ENCODE measurements at regions of chr19 and their contacts with region 1.

Region 1: DNA sequence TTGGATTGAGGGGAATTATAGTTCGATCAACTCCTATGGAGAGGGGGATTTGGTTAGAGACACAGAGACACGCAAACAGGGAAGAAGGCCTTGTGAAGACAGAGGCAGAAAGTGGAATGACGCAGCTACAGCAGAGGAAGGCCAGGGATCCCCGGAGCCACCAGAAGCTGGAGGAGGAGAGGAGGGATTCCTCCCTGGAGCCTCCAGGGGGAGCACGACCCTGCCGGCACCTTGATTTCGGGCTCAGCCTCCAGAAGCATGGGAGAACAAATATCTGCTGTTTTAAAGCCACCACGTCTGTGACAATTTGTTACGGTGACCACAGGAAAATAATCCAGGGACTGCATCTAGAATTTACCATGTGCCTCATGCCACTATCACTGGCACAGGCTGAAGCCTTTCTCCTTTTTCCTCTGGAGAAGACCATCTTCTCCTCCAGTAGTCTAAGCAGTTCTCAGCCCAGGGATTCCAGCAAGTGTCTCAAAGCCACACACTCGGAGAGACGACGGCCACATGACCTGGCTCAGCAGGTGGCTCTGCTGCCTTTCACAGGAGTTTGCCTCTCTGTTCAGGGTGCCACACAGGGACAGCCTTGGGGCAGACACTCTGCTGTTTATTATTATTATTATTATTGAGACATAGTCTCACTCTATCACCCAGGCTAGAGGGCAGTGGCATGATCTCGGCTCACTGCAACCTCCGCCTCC is 39.9 kb upstream of the CCNE1 start:
- DNase-seq: no peak
- H3K4me3 ChIP-seq: no peak overlapping the region
- H3K27ac ChIP-seq: no peak overlapping the region
- H3K4me1 ChIP-seq: peaks cover 0 to 5% (median 4%) of the 10 kb centered on the region in 4 donors
- H3K27me3 ChIP-seq: no peaks in the 10 kb centered on the region
- CTCF ChIP-seq: peak; percentile 67 to 84 (median 69)
- EP300 ChIP-seq: no peak
- POLR2A ChIP-seq: no peak

Region 2: DNA sequence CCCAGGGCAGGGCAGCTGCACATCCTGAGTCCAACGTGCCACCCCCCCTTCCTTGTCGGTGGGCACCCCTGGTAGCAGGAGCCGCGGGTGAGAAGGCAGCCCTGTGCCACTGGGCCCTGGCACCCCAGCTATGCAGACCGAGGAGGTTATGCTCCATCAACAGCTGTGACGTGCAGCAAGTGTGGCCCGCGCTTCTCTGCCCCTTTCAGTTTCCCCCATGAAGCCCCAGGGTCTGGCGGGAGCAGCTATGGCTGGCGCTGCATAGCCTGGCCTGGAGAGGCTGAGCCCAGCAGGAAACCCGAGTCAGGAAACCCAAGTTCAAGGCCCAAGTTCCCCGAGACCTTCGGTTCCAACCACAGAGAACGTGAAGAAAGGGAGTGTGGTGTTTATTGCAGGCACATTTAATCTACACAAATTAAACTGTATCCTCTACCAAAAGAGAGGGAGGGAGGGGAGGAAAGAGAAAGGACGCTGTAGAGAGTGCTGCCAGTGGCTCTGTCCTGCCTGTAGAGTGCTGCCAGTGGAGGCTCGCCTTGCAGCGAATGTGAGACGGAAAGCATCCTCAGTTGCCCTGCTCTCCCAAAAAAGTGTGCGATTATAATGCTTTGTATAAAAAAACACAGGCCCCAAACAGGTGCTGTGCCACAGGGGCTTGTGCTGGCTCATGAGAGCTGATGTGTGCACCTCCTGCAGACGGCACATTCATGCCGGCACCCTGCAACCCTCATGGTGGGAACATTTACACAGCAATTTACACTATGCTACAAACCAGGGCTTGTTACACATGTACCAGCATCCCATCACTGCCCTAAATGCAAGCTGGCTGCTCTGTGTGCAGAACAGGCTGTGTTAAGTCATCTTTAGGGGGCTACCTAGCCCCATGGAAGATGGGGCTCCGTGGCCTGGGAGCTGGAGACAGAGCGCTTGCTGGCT is 149.5 kb before region 1 on chr19:
- intact Hi-C with region 1: no loop called
- DNase-seq: no peak
- H3K4me3 ChIP-seq: no peak overlapping the region
- H3K27ac ChIP-seq: no peak overlapping the region
- H3K4me1 ChIP-seq: no peaks in the 10 kb centered on the region
- H3K27me3 ChIP-seq: peaks cover 0 to 28% (median 0%) of the 10 kb centered on the region in 4 donors
- CTCF ChIP-seq: no peak
- EP300 ChIP-seq: no peak
- POLR2A ChIP-seq: no peak

Region 3: GRCh38 chr19:29715701-29716581 is 55.9 kb before region 1 on chr19:
- intact Hi-C with region 1: no loop called
- DNase-seq: no peak
- H3K4me3 ChIP-seq: peak overlapping the region; percentile 68 to 100 (median 98)
- H3K27ac ChIP-seq: peak overlapping the region; percentile 91 to 97 (median 94)
- H3K4me1 ChIP-seq: peaks cover 17 to 53% (median 42%) of the 10 kb centered on the region in 4 donors
- H3K27me3 ChIP-seq: no peaks in the 10 kb centered on the region
- CTCF ChIP-seq: no peak
- EP300 ChIP-seq: no peak
- POLR2A ChIP-seq: no peak

Region 4: DNA sequence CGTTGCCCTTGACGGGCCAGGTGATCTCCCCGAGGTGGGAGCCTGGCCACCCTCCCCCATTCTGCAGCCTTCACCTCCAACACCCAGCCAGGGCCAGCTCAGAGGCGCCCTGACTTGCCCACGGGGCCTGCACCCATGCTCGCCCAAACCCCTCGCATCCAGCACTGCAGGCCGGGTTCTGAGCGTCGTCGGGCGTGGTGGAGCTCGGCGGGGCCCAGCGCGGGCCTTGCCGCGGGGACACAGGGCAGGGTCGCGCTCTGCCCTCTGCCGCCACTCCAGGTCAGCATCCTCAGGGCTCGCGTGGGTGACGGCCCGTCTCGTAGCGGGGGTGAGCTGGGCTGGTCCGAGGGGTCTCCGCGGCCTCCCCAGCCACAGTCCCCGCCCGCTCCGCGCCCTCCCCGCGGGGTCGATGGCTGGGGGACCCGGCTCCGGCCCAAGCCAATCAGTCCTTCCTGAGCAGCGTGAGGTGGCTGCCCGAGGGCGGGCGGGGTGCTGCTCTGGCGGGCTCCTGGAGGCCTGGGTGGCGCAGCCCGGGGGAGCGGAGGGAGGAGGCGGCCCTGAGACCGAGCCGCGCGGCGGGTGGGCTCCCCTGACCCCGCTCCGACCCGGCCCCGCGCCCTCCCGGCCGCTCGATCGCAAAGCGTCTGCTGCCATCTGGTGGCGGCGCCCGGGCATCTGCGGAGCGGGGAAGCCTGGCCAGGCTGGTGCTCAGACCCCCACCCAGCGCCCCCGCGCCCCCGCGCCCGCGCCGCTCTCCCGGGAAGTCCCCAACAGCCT is 101.4 kb after region 1 on chr19:
- intact Hi-C with region 1: loop called (anchors 5 kb)
- DNase-seq: no peak
- H3K4me3 ChIP-seq: peak overlapping the region; percentile 52 to 63 (median 54)
- H3K27ac ChIP-seq: no peak overlapping the region
- H3K4me1 ChIP-seq: peaks cover 18 to 42% (median 36%) of the 10 kb centered on the region in 4 donors
- H3K27me3 ChIP-seq: peaks cover 0 to 41% (median 12%) of the 10 kb centered on the region in 4 donors
- CTCF ChIP-seq: peak; percentile 81 to 98 (median 95)
- EP300 ChIP-seq: no peak
- POLR2A ChIP-seq: no peak

Region 5: GRCh38 chr19:29887442-29887855 is 115.6 kb after region 1 on chr19:
- intact Hi-C with region 1: no loop called
- DNase-seq: no peak
- H3K4me3 ChIP-seq: no peak overlapping the region
- H3K27ac ChIP-seq: no peak overlapping the region
- H3K4me1 ChIP-seq: peaks cover 0 to 4% (median 0%) of the 10 kb centered on the region in 4 donors
- H3K27me3 ChIP-seq: peaks cover 0 to 25% (median 0%) of the 10 kb centered on the region in 4 donors
- CTCF ChIP-seq: no peak
- EP300 ChIP-seq: no peak
- POLR2A ChIP-seq: no peak

Measured in esophagus muscularis mucosa (tissue), 4 donors.